HEK293T (cell line): ENCODE measurements at regions of chr7 and their contacts with region 1.

Region 1: GRCh38 chr7:44847508-44847920 is 373 bp downstream of the H2AZ2 start:
- DNase-seq: peak; percentile 84

Region 2: DNA sequence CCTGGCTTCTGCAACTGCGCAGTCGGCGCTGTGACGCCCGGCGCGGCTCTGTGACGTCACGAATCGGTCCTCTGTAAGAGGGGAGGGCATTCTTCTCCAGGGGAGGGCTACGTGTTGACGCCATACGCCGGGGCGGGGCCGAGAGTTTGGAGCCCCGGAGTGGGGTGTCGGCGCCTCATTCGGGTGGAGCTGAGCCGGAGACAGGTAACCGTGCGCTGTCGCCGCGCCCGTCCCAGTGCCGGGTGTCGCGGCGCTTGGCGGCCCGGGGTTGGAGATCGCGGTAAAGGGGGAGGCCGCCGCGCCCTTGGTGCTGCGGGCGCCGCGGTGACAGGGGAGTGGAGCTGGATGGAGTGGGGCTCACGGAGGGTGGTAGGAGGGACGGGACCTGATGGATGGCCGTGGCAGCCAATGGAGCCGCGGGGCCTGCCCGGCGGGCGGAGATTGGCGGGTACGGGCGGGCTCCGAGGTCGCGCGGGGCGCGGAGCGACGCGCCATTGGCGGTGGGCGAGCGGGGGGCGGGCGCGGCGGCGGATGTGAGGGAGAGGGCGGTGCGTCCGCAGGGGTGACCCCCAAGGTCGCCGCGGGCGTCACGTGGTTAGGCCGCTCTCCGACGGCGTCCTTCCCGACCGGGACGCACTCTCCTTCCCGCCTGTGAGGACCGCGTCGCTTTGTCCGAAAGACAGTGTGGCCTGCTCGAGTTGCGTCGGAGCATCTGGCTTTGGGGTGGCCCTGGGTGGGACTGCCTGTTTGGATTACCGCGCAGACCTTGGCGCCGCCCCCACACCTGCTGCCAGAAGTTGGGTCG is 240.9 kb before region 1 on chr7 and contains the start of gene OGDH:
- CTCF ChIA-PET with region 1: no interaction called
- POLR2A ChIA-PET with region 1: interaction called, 19 read pairs
- DNase-seq: peak; percentile 98

Region 3: GRCh38 chr7:44805950-44806349 is 41.6 kb before region 1 on chr7:
- CTCF ChIA-PET with region 1: no interaction called
- POLR2A ChIA-PET with region 1: interaction called, 26 read pairs
- DNase-seq: no peak

Region 4: GRCh38 chr7:44858161-44858560 is 10.6 kb after region 1 on chr7:
- CTCF ChIA-PET with region 1: interaction called, 4 read pairs
- POLR2A ChIA-PET with region 1: interaction called, 13 read pairs
- DNase-seq: no peak

Region 5: GRCh38 chr7:44885394-44886317 is 38.1 kb after region 1 on chr7 and contains the start of gene PURB:
- CTCF ChIA-PET with region 1: no interaction called
- POLR2A ChIA-PET with region 1: interaction called, 39 read pairs
- DNase-seq: peak; percentile 94